ENCODE measurements at regions of chr20 and their contacts with region 1.

Region 1: GRCh38 chr20:833450-834150 is at the start of gene FAM110A:
- DNase-seq: peak; percentile 95 to 96
- H3K4me3 ChIP-seq: peak within 1 kb of the TSS; percentile 71
- H3K4me3 Mint-ChIP-seq: peak within 1 kb of the TSS; percentile 91
- H3K27ac Mint-ChIP-seq: peak within 1 kb of the TSS; percentile 36
- H3K4me1 ChIP-seq: peaks cover 16% of the 10 kb centered on the region
- H3K4me1 Mint-ChIP-seq: peaks cover 12% of the 10 kb centered on the region
- H3K27me3 ChIP-seq: no peaks in the 10 kb centered on the region
- H3K27me3 Mint-ChIP-seq: no peaks in the 10 kb centered on the region
- CTCF ChIP-seq: no peak
- total RNA-seq, gene FAM110A: 13.8 and 18.4 TPM in 2 replicates

Region 2: DNA sequence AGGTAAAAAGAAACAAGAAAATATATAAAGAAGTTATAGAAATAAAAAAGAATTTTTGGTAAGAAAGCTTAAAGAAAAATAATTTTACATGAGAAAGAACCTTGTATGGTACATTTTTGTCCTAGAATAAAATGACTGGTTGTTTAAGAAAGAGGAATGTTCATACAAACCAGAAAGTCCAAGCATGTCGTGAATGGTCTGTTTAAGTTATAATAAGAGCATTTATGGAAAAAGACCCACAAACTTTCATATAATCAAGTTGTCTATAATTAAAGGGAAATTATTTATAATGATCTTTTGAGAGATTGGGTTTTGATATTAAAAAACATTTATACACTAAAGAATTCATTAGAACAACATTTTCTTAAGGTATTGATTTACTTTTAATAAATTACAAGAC is 27.9 kb before region 1 on chr20:
- CTCF ChIA-PET with region 1: no interaction called
- POLR2A ChIA-PET with region 1: no interaction called
- intact Hi-C with region 1: no loop called
- DNase-seq: no peak
- H3K4me3 ChIP-seq: no peak overlapping the region
- H3K4me3 Mint-ChIP-seq: no peak overlapping the region
- H3K27ac Mint-ChIP-seq: no peak overlapping the region
- H3K4me1 ChIP-seq: no peaks in the 10 kb centered on the region
- H3K4me1 Mint-ChIP-seq: no peaks in the 10 kb centered on the region
- H3K27me3 ChIP-seq: no peaks in the 10 kb centered on the region
- H3K27me3 Mint-ChIP-seq: no peaks in the 10 kb centered on the region
- CTCF ChIP-seq: no peak

Region 3: GRCh38 chr20:844473-845225 is 11.0 kb after region 1 on chr20:
- CTCF ChIA-PET with region 1: interaction called, 10 read pairs
- POLR2A ChIA-PET with region 1: no interaction called
- intact Hi-C with region 1: loop called (anchors 1 kb)
- DNase-seq: peak; percentile 76 to 89
- H3K4me3 ChIP-seq: no peak overlapping the region
- H3K4me3 Mint-ChIP-seq: no peak overlapping the region
- H3K27ac Mint-ChIP-seq: no peak overlapping the region
- H3K4me1 ChIP-seq: peaks cover 19% of the 10 kb centered on the region
- H3K4me1 Mint-ChIP-seq: peaks cover 8% of the 10 kb centered on the region
- H3K27me3 ChIP-seq: no peaks in the 10 kb centered on the region
- H3K27me3 Mint-ChIP-seq: no peaks in the 10 kb centered on the region
- CTCF ChIP-seq: no peak

Region 4: DNA sequence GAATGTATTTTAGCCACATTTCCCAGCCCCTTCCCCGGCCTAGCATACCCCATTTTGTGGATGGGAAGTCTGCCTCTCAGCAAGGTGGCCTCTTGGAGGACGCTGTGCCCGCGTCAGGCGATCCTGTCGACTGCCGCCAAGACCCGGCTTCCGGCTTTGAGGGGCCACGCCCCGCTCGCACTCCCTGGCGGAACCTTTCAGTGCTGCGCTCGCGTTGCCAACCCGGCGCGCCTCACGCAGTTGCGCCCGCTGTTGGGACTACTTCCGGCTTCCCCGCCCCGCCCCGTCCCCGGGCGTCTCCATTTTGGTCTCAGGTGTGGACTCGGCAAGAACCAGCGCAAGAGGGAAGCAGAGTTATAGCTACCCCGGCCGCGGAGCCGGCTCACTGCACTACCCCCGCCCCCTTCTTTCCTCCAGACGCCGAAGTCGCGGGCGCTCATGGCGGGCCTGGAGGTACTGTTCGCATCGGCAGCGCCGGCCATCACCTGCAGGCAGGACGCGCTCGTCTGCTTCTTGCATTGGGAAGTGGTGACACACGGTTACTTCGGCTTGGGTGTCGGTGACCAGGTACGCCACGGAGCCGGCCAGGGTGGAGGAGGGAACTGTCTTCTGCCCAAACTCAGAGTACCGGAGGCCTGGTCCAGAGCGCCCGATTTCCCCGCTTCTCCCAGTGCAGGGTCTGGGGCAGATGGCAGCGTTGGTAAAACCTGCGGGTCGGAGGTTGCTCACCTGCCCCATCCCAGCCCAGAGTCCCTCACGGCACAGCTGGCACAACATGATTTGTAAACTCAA is 284.9 kb after region 1 on chr20 and contains the start of gene PSMF1:
- CTCF ChIA-PET with region 1: no interaction called
- POLR2A ChIA-PET with region 1: no interaction called
- intact Hi-C with region 1: loop called (anchors 5 kb)
- DNase-seq: peak; percentile 95 to 98
- H3K4me3 ChIP-seq: peak within 1 kb of the TSS; percentile 78
- H3K4me3 Mint-ChIP-seq: peak within 1 kb of the TSS; percentile 82
- H3K27ac Mint-ChIP-seq: peak within 1 kb of the TSS; percentile 74
- H3K4me1 ChIP-seq: peaks cover 11% of the 10 kb centered on the region
- H3K4me1 Mint-ChIP-seq: peaks cover 20% of the 10 kb centered on the region
- H3K27me3 ChIP-seq: no peaks in the 10 kb centered on the region
- H3K27me3 Mint-ChIP-seq: no peaks in the 10 kb centered on the region
- CTCF ChIP-seq: no peak
- total RNA-seq, gene PSMF1: 121 and 141 TPM in 2 replicates

Measured in Caco-2 (cell line).